ENCODE measurements at regions of chr19 and their contacts with region 1.

Region 1: GRCh38 chr19:39970675-39971379 is at the start of gene PSMC4:
- DNase-seq: peak; percentile 99
- total RNA-seq, gene PSMC4: 70.2 TPM

Region 2: GRCh38 chr19:39768334-39768733 is 202.5 kb before region 1 on chr19:
- intact Hi-C with region 1: no loop called
- DNase-seq: no peak

Region 3: GRCh38 chr19:39792999-39793546 is 177.8 kb before region 1 on chr19:
- intact Hi-C with region 1: loop called (anchors 10 kb)
- DNase-seq: peak; percentile 78

Region 4: DNA sequence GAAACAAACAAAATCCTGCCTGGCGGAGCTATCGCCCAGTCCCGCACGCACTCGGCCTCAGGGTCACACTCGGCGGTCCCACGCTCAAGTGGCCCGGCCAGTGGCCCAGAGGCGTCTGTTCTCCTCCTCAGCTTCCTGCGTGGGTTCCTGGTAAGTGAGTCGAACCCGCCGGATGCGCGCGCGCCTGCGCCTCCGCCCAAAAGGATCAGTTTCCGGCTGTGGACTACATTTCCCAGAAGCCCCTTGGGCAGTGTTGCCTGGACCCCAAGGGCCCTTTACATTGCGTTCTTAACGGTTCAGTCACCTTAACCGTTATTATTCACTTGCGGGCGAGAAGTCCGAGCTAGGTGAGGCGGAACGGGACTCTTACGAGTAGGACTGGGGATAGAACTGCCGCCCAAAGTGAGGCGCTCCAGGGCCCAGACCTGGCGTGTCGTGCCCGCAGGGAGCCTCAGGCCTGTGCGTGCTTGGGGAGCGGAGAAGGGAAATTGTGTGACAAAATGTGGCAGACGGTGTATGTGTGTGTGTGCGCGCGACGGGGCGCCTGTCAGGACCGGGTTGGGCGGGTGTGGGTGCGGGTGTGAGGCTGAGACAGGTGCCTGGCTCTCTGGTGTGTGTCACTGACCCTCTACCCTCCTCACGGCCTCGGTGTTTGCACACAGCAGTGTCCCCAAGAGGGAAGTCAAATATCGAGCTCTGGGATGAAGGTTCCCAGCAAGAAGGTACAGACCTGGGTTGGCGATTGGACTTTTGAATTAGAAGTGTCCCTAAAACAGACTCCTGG is 26.2 kb after region 1 on chr19 and contains the start of gene ZNF546:
- intact Hi-C with region 1: loop called (anchors 1 kb)
- DNase-seq: peak; percentile 96
- total RNA-seq, gene ZNF546: 10.1 TPM